ENCODE measurements at regions of chr10 and their contacts with region 1.

Region 1: GRCh38 chr10:73644015-73644743 is 2.9 kb upstream of the MYOZ1 start:
- DNase-seq: peak in 1 of 2 donors; percentile 58
- ATAC-seq: peak; percentile 78
- H3K4me3 ChIP-seq: no peak overlapping the region
- H3K27ac ChIP-seq: no peak overlapping the region
- H3K4me1 ChIP-seq: no peaks in the 10 kb centered on the region
- H3K27me3 ChIP-seq: no peaks in the 10 kb centered on the region

Region 2: GRCh38 chr10:73529089-73529832 is 114.9 kb before region 1 on chr10:
- intact Hi-C with region 1: loop called (anchors 1 kb)
- DNase-seq: no peak
- ATAC-seq: peak; percentile 82
- H3K4me3 ChIP-seq: no peak overlapping the region
- H3K27ac ChIP-seq: no peak overlapping the region
- H3K4me1 ChIP-seq: no peaks in the 10 kb centered on the region
- H3K27me3 ChIP-seq: no peaks in the 10 kb centered on the region

Region 3: GRCh38 chr10:73576178-73576889 is 67.8 kb before region 1 on chr10:
- intact Hi-C with region 1: loop called (anchors 5 kb)
- DNase-seq: no peak
- ATAC-seq: peak; percentile 87
- H3K4me3 ChIP-seq: peak overlapping the region in 1 of 2 donors; percentile 41
- H3K27ac ChIP-seq: peak overlapping the region; percentile 42 to 97
- H3K4me1 ChIP-seq: peaks cover 2 to 3% of the 10 kb centered on the region in 2 donors
- H3K27me3 ChIP-seq: no peaks in the 10 kb centered on the region

Region 4: DNA sequence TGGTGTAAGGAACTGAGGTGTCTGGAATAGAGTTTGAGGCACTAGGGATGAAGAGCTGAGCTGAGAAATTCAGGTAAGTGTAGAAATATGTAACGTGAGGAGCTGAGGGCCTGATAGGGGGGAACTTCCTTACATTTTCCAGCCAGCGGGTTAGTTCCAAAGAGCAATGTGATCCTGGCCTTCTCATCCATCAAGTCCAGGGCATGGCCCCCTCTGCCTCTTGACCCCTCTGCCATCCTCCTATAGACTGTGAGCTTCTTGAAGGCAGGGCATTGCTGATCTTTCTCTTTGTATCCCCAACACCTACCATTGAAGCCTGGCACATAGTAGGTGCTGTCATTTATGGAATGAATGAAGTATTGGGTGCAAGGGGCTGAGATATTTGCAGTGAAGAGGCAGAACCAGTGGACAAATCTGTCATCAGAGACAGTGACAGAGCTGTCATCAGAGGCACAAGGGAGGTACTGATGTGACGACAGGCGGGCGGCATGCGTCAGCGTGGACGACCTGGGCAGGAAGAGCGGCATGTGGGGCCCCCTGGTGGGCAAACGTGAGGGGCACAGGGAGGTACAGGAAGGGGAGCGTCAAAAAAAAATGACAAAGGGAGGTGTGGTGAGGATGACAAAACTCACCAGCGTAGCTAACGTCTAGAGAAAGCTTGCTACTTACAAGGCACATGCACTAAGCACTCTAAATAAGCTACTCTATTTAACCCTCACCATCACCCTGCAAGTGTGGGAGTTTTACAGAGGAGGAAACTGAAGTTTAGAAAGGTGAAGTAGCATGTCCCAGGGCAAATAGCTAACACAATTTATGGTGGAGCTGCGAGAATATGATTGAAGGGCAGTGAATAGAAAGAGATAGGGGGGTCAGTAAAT is 235.4 kb after region 1 on chr10:
- intact Hi-C with region 1: no loop called
- DNase-seq: peak; percentile 93 to 97
- ATAC-seq: peak; percentile 92
- H3K4me3 ChIP-seq: no peak overlapping the region
- H3K27ac ChIP-seq: peak overlapping the region in 1 of 2 donors; percentile 14
- H3K4me1 ChIP-seq: peaks cover 2% of the 10 kb centered on the region in 2 donors
- H3K27me3 ChIP-seq: no peaks in the 10 kb centered on the region

Measured in aorta (tissue), 5 donors.